Activated CD8-positive, alpha-beta T cell treated with anti-CD3 and anti-CD28 coated beads, Interleukin-2, amount 10 ng/mL, durations not matched to agents 7 days and 5 days (primary cell): ENCODE measurements at regions of chr6 and their contacts with region 1.

Region 1: DNA sequence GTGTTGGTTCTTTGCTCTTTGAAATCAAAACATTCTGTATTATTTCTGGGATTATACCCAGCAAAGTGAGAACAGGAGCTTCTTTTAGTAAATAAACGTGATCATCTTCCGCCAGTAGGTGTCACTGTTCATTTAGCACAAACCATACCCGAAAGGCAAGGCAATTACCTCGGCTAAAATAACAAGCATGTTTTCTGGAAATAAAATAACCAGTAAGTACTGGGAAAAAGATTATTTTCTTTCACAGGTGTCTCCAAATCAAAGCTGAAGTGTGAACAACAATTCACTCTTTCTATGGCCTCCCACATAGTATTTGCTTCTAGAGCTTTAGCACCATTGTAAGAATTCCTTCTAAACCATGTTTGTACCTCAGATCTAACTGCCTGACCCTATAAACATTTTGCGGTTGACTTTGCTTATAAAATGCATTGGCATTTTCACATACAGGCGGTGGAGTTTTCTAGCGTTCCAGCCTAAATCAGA is 144.6 kb upstream of the AGPAT4 start:
- DNase-seq: peak; percentile 65
- ATAC-seq: no peak
- H3K4me3 Mint-ChIP-seq: no peak overlapping the region
- H3K27ac Mint-ChIP-seq: no peak overlapping the region
- H3K4me1 Mint-ChIP-seq: no peaks in the 10 kb centered on the region
- H3K27me3 Mint-ChIP-seq: peaks cover 4% of the 10 kb centered on the region

Region 2: GRCh38 chr6:161367472-161367871 is 51.0 kb before region 1 on chr6:
- CTCF ChIA-PET with region 1: no interaction called
- POLR2A ChIA-PET with region 1: no interaction called
- DNase-seq: no peak
- ATAC-seq: no peak
- H3K4me3 Mint-ChIP-seq: no peak overlapping the region
- H3K27ac Mint-ChIP-seq: no peak overlapping the region
- H3K4me1 Mint-ChIP-seq: no peaks in the 10 kb centered on the region
- H3K27me3 Mint-ChIP-seq: no peaks in the 10 kb centered on the region

Region 3: GRCh38 chr6:161393839-161394364 is 24.6 kb before region 1 on chr6:
- CTCF ChIA-PET with region 1: interaction called, 15 read pairs
- POLR2A ChIA-PET with region 1: no interaction called
- DNase-seq: peak; percentile 83
- ATAC-seq: peak; percentile 100
- H3K4me3 Mint-ChIP-seq: no peak overlapping the region
- H3K27ac Mint-ChIP-seq: no peak overlapping the region
- H3K4me1 Mint-ChIP-seq: no peaks in the 10 kb centered on the region
- H3K27me3 Mint-ChIP-seq: peaks cover 8% of the 10 kb centered on the region

Region 4: GRCh38 chr6:161429921-161430490 is 11.5 kb after region 1 on chr6:
- CTCF ChIA-PET with region 1: interaction called, 16 read pairs
- POLR2A ChIA-PET with region 1: no interaction called
- DNase-seq: no peak
- ATAC-seq: no peak
- H3K4me3 Mint-ChIP-seq: no peak overlapping the region
- H3K27ac Mint-ChIP-seq: no peak overlapping the region
- H3K4me1 Mint-ChIP-seq: no peaks in the 10 kb centered on the region
- H3K27me3 Mint-ChIP-seq: no peaks in the 10 kb centered on the region

Region 5: DNA sequence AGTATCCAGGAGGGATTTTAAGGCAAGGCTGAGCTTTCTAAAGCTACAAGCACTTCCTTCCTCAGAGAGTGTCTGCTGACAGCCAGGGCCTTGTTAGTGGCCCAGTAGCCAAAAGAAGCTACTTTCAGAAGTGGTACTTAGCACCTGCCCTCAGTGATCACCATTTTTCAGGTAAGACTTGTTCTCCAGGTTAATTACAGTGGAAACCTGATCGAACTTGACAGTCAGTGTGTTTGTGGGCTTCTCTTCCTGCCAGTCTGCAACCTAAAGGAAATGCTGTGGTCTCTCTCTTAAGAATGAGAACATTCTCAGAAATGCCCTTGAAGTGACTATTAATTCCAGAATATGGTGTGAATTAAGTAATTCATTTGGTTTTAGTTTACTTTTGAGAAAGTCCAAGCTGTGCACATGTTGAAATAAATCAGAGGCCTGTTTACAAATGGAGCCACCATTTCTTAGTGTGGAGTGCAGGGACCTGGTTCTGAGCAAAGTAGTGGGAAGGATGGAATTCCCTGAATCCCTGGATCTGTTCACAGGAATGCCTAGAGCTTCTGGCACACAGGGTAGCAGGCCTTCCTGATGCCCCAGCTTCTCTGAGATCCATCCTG is 40.6 kb after region 1 on chr6:
- CTCF ChIA-PET with region 1: interaction called, 15 read pairs
- POLR2A ChIA-PET with region 1: no interaction called
- DNase-seq: peak; percentile 25
- ATAC-seq: peak; percentile 55
- H3K4me3 Mint-ChIP-seq: no peak overlapping the region
- H3K27ac Mint-ChIP-seq: peak overlapping the region; percentile 65
- H3K4me1 Mint-ChIP-seq: peaks cover 32% of the 10 kb centered on the region
- H3K27me3 Mint-ChIP-seq: peaks cover 7% of the 10 kb centered on the region

Region 6: DNA sequence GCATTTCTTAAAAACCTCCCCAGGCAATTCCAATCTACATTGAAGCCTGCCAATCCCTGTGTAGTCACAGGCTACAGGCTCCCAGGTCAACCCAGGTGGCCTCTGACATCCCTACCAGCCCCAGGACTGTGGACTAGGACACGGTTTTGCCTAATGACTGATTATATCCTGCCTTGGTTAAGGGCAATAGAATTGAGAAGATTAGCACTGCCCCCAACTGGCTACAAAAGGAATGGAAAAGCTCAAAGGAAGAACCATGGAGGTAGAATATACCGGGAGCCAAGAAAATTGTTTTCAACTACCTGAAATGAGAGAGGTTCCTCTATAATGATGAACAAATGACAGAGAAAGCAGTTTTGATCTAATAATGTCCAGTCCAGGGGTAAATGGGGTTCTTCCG is 276.5 kb after region 1 on chr6:
- CTCF ChIA-PET with region 1: interaction called, 25 read pairs
- POLR2A ChIA-PET with region 1: no interaction called
- DNase-seq: peak; percentile 23
- ATAC-seq: no peak
- H3K4me3 Mint-ChIP-seq: no peak overlapping the region
- H3K27ac Mint-ChIP-seq: no peak overlapping the region
- H3K4me1 Mint-ChIP-seq: no peaks in the 10 kb centered on the region
- H3K27me3 Mint-ChIP-seq: no peaks in the 10 kb centered on the region